ENCODE measurements at regions of chr9 and their contacts with region 1.

Region 1: GRCh38 chr9:34627716-34628655 is 880 bp downstream of the ARID3C start:
- DNase-seq: no peak
- ATAC-seq: no peak
- H3K4me3 ChIP-seq: peak overlapping the region; percentile 18
- H3K27ac ChIP-seq: no peak overlapping the region
- H3K4me1 ChIP-seq: peaks cover 0 to 24% of the 10 kb centered on the region in 2 experiments; a peak in 3 of 5 replicates
- H3K27me3 ChIP-seq: peaks cover 14 to 55% of the 10 kb centered on the region in 2 experiments; a peak in 4 of 5 replicates
- CTCF ChIP-seq: no peak
- EP300 ChIP-seq: no peak
- POLR2A ChIP-seq: no peak
- RAD21 ChIP-seq: no peak

Region 2: DNA sequence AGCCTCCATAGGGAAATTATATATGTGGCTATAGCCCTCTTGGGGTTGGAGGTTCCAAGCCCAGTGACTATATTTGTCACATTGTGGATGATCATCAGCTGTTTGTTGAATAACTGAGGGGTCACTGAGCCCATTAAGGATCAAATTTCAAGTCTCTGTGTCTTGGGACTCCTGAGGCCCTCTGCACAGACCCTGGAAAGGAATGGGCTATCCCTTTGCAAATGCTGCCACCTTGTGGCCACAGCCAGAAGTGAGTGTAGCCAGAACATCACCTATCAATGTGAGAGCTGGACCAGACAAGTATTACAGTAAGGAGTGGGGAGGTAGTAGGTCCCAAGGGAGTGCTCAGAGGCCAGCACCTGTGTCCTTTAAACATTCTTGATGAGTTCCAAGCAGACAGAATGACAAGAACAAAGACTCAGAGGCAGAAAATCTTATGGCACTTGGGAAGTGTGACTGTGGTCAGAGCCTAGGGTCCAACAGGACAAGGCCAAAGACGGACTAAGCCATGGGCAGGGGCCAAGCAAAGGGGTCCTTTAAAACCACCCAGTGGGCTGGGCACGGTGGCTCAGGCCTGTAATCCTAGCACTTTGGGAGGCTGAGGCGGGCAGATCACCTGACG is 24.3 kb before region 1 on chr9:
- CTCF ChIA-PET with region 1: no interaction called
- POLR2A ChIA-PET with region 1: interaction called, 5 read pairs
- in situ Hi-C with region 1: no loop called
- intact Hi-C with region 1: loop called (anchors 2 kb)
- DNase-seq: peak; percentile 75 to 81 (median 78)
- ATAC-seq: peak; percentile 93
- H3K4me3 ChIP-seq: no peak overlapping the region
- H3K27ac ChIP-seq: no peak overlapping the region
- H3K4me1 ChIP-seq: peaks cover 0 to 7% of the 10 kb centered on the region in 2 experiments; a peak in 2 of 5 replicates
- H3K27me3 ChIP-seq: no peaks in the 10 kb centered on the region
- CTCF ChIP-seq: peak; percentile 75 to 86 (median 84)
- EP300 ChIP-seq: no peak
- POLR2A ChIP-seq: no peak
- RAD21 ChIP-seq: peak; percentile 71 to 87

Region 3: GRCh38 chr9:35711501-35712428 is 1083.8 kb after region 1 on chr9:
- CTCF ChIA-PET with region 1: no interaction called
- POLR2A ChIA-PET with region 1: no interaction called
- in situ Hi-C with region 1: no loop called
- intact Hi-C with region 1: no loop called
- DNase-seq: no peak
- ATAC-seq: no peak
- H3K4me3 ChIP-seq: no peak overlapping the region
- H3K27ac ChIP-seq: no peak overlapping the region
- H3K4me1 ChIP-seq: no peaks in the 10 kb centered on the region
- H3K27me3 ChIP-seq: no peaks in the 10 kb centered on the region
- CTCF ChIP-seq: no peak
- EP300 ChIP-seq: no peak
- POLR2A ChIP-seq: no peak
- RAD21 ChIP-seq: no peak